ENCODE measurements at regions of chr3 and their contacts with region 1.

Region 1: GRCh38 chr3:156674046-156674910 is at the start of gene TIPARP:
- DNase-seq: peak; percentile 100
- ATAC-seq: peak; percentile 95 to 97 (median 96)
- H3K4me3 ChIP-seq: peak within 1 kb of the TSS; percentile 88
- H3K27ac ChIP-seq: peak within 1 kb of the TSS; percentile 96
- H3K4me1 ChIP-seq: peaks cover 37% of the 10 kb centered on the region
- H3K27me3 ChIP-seq: no peaks in the 10 kb centered on the region
- CTCF ChIP-seq: peak; percentile 68
- total RNA-seq, gene TIPARP: 10.5 to 18.1 (median 16.0) TPM

Region 2: GRCh38 chr3:156483961-156484787 is 190.1 kb before region 1 on chr3:
- intact Hi-C with region 1: no loop called
- DNase-seq: no peak
- ATAC-seq: no peak
- H3K4me3 ChIP-seq: no peak overlapping the region
- H3K27ac ChIP-seq: no peak overlapping the region
- H3K4me1 ChIP-seq: no peaks in the 10 kb centered on the region
- H3K27me3 ChIP-seq: no peaks in the 10 kb centered on the region
- CTCF ChIP-seq: no peak

Region 3: GRCh38 chr3:156554842-156555687 is 119.2 kb before region 1 on chr3 and contains the start of gene SSR3:
- intact Hi-C with region 1: loop called (anchors 5 kb)
- DNase-seq: peak; percentile 100
- ATAC-seq: peak; percentile 100
- H3K4me3 ChIP-seq: peak within 1 kb of the TSS; percentile 80
- H3K27ac ChIP-seq: peak within 1 kb of the TSS; percentile 82
- H3K4me1 ChIP-seq: peaks cover 34% of the 10 kb centered on the region
- H3K27me3 ChIP-seq: no peaks in the 10 kb centered on the region
- CTCF ChIP-seq: peak; percentile 27
- total RNA-seq, gene SSR3: 53.2 to 121 (median 71.0) TPM

Region 4: GRCh38 chr3:156643729-156644389 is 30.4 kb before region 1 on chr3:
- intact Hi-C with region 1: loop called in 1 of 2 experiments (anchors 2 kb)
- DNase-seq: no peak
- ATAC-seq: peak in 1 of 4 donors; percentile 24
- H3K4me3 ChIP-seq: no peak overlapping the region
- H3K27ac ChIP-seq: no peak overlapping the region
- H3K4me1 ChIP-seq: peaks cover 25% of the 10 kb centered on the region
- H3K27me3 ChIP-seq: no peaks in the 10 kb centered on the region
- CTCF ChIP-seq: no peak

Region 5: GRCh38 chr3:157081681-157082210 is 407.5 kb after region 1 on chr3:
- intact Hi-C with region 1: loop called (anchors 1 to 5 kb)
- DNase-seq: peak; percentile 91 to 95
- ATAC-seq: peak; percentile 83 to 90 (median 88)
- H3K4me3 ChIP-seq: no peak overlapping the region
- H3K27ac ChIP-seq: no peak overlapping the region
- H3K4me1 ChIP-seq: peaks cover 19% of the 10 kb centered on the region
- H3K27me3 ChIP-seq: no peaks in the 10 kb centered on the region
- CTCF ChIP-seq: peak; percentile 98

Region 6: GRCh38 chr3:157142315-157142714 is 468.0 kb after region 1 on chr3:
- intact Hi-C with region 1: loop called (anchors 5 to 10 kb)
- DNase-seq: no peak
- ATAC-seq: no peak
- H3K4me3 ChIP-seq: no peak overlapping the region
- H3K27ac ChIP-seq: no peak overlapping the region
- H3K4me1 ChIP-seq: peaks cover 4% of the 10 kb centered on the region
- H3K27me3 ChIP-seq: no peaks in the 10 kb centered on the region
- CTCF ChIP-seq: no peak